GM12878 (cell line): ENCODE measurements at regions of chr5 and their contacts with region 1.

Region 1: DNA sequence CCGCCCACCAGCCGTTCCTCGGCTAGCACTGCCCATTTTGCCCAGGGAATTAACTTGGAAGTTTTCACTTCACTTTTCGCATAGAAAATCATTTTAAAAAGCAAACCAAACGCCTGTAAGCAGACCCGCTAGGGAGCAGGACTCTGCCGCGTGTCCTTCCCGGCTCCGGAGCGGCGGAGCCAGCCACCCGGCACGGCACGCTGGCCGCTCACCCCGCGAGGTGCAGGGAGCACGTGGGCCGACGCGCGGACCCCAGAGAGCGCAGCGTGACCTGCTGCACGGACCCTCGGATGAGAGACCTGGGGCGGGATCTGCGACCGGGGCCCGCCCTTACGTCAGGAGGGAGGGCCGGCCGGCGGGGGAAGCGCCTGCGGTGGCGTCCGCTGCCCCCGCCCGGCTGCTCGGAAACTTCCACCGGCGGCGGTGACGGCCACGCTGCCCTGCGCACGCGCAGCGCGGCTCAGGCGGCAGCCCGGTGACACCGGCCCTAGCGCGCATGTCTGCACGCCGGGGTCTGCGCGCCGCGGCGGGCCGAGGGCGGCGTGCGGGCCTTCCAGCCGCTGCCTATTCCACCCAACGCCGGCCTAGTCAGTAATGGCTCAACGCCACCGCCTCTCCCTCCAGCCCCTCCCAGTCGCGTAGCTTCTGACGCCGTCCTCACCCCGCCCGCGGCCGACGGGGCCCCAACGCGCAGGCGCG is 506 bp upstream of the TENT4A start:
- DNase-seq: peak; percentile 72
- ATAC-seq: peak; percentile 72
- H3K4me3 ChIP-seq: peak overlapping the region; percentile 85
- H3K27ac ChIP-seq: peak overlapping the region; percentile 93
- H3K4me1 ChIP-seq: peaks cover 26% of the 10 kb centered on the region
- H3K27me3 ChIP-seq: no peaks in the 10 kb centered on the region
- CTCF ChIP-seq: peak in 1 of 3 experiments; percentile 30; a peak in 2 of 6 replicates
- EP300 ChIP-seq: 0 out of 4 replicates have a peak, but pooled peaks of 1 of the 2 experiments have one; percentile 5
- POLR2A ChIP-seq: peak; percentile 75
- RAD21 ChIP-seq: no peak

Region 2: DNA sequence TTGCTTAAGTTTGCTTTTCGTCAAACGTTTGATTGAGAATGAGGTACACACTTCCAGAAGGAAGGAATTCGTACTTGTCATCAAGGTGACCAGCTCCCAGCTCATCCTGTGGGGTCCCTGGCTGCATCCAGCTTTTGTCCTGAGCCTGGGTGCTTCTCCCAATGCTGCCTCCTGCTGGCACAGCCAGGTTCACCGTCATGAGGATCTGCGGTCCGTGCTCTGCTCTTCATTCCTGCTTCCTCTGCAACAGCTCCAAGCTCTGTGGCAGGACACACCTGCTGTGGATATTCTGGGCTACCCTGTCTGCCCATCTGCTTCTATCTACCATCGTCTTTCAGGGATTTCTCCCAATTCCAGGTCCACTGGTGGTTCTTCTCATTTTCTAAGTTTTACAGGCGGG is 277.4 kb before region 1 on chr5:
- CTCF ChIA-PET with region 1: no interaction called
- POLR2A ChIA-PET with region 1: no interaction called
- RAD21 ChIA-PET with region 1: no interaction called
- SMC1A ChIA-PET with region 1: no interaction called
- in situ Hi-C with region 1: no loop called
- intact Hi-C with region 1: no loop called
- DNase-seq: no peak
- ATAC-seq: peak; percentile 42; the same call in 2 of the 3 replicates
- H3K4me3 ChIP-seq: no peak overlapping the region
- H3K27ac ChIP-seq: no peak overlapping the region
- H3K4me1 ChIP-seq: no peaks in the 10 kb centered on the region
- H3K27me3 ChIP-seq: peaks cover 3 to 4% of the 10 kb centered on the region in 2 experiments; a peak in 2 of 4 replicates
- CTCF ChIP-seq: peak; percentile 27 to 52 (median 32); a peak in 3 of 6 replicates
- EP300 ChIP-seq: no peak
- POLR2A ChIP-seq: no peak
- RAD21 ChIP-seq: no peak

Region 3: DNA sequence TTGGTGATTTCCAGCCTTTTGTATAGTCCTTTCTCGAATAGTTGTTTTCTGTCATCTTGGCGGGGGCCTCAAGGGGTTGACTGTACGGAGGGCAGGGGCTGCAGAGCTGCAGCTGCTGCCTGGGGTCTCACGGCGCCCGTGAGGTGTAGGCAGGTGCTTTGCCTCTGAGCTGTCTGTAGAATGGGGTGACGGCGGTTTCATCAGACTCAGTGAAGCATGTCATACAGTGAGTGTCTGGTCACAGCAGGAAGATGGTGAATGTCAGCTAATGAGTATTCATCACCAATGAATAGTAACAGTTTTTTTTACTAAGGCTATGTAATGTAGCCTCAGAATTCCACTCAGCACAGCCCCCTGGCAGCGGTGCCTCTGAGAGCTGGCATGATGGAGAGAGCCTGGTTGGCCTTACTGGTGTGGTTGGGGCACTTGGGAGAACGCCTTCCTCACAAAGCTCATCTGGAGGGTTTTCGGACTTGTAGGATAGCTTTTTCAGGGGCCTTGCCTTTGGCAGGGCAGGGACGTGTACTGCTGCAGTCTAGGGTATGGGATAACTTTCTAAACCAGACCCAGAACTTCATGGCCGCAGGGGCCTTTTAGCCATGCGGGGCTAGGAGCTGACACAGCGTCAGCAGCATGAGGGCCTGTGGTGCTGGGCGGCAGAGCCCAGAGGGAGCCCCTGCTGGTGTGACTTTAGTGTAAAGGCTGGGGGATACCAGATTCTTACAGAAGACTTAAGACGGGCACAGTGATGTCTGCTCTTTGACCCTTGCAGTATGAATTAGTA is 15.5 kb after region 1 on chr5:
- CTCF ChIA-PET with region 1: interaction called, 17 read pairs
- POLR2A ChIA-PET with region 1: interaction called, 35 read pairs
- RAD21 ChIA-PET with region 1: interaction called, 32 read pairs
- SMC1A ChIA-PET with region 1: interaction called, 41 read pairs
- in situ Hi-C with region 1: no loop called
- intact Hi-C with region 1: loop called (anchors 2 kb)
- DNase-seq: no peak
- ATAC-seq: peak; percentile 89
- H3K4me3 ChIP-seq: peak overlapping the region; percentile 31
- H3K27ac ChIP-seq: peak overlapping the region; percentile 84
- H3K4me1 ChIP-seq: peaks cover 64% of the 10 kb centered on the region
- H3K27me3 ChIP-seq: no peaks in the 10 kb centered on the region
- CTCF ChIP-seq: no peak
- EP300 ChIP-seq: peak; percentile 64 to 91
- POLR2A ChIP-seq: 0 out of 2 replicates have a peak, but pooled peaks have one; percentile 15
- RAD21 ChIP-seq: no peak

Region 4: DNA sequence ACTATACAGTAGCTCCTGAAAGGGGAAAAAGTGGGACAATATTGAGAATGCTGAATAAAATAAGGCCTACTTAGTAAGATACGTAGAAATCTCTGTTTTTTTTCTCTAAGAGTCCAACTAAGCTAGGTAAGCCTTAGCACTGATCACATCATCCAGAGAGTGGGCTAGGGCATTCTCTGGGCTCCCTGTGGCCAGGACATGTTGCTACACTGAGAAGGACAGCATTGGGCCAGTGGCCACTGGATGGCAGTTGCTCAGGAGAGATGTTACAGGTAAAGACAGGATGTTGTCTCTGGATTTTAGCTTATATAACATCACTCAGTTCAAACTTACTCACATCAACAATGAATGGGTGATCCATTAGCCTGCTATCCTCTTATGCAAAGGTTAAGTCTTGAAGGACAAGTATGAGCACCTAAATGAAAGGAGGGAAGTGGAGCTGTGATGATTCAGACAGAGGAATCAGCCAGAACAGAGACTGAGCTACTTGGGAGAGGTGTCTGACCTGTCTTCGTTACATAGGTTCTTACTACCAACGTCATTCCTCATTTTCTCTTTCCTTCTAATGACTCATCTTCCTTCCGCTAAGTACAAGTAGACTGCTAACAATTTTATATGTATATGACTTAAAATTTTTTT is 456.6 kb after region 1 on chr5:
- CTCF ChIA-PET with region 1: no interaction called
- POLR2A ChIA-PET with region 1: no interaction called
- RAD21 ChIA-PET with region 1: no interaction called
- SMC1A ChIA-PET with region 1: no interaction called
- in situ Hi-C with region 1: no loop called
- intact Hi-C with region 1: no loop called
- DNase-seq: no peak
- ATAC-seq: no peak
- H3K4me3 ChIP-seq: no peak overlapping the region
- H3K27ac ChIP-seq: no peak overlapping the region
- H3K4me1 ChIP-seq: no peaks in the 10 kb centered on the region
- H3K27me3 ChIP-seq: no peaks in the 10 kb centered on the region
- CTCF ChIP-seq: no peak
- EP300 ChIP-seq: no peak
- POLR2A ChIP-seq: no peak
- RAD21 ChIP-seq: no peak

Region 5: DNA sequence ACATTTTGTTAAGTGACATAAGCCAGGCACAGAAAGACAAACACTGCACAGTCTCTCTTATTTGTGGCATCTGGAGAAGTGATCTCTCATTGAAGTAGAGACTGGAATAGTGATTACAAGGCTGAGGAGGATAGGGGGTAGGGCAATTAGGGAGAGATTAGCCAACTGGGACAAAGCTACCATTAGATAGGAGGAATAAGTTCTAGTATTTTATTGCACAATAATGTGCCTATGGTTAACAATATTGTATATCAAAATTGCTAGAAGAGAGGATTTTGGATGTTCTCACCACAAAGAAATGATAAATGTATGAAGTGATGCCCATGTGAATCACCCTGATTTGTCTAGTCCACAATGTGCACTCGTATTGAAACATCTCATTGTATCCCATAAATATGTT is 1438.1 kb after region 1 on chr5:
- CTCF ChIA-PET with region 1: no interaction called
- POLR2A ChIA-PET with region 1: no interaction called
- RAD21 ChIA-PET with region 1: no interaction called
- SMC1A ChIA-PET with region 1: no interaction called
- in situ Hi-C with region 1: no loop called
- intact Hi-C with region 1: no loop called
- DNase-seq: no peak
- ATAC-seq: no peak
- H3K4me3 ChIP-seq: no peak overlapping the region
- H3K27ac ChIP-seq: no peak overlapping the region
- H3K4me1 ChIP-seq: no peaks in the 10 kb centered on the region
- H3K27me3 ChIP-seq: no peaks in the 10 kb centered on the region
- CTCF ChIP-seq: no peak
- EP300 ChIP-seq: no peak
- POLR2A ChIP-seq: no peak
- RAD21 ChIP-seq: no peak